Activated CD8-positive, alpha-beta T cell treated with anti-CD3 and anti-CD28 coated beads for 36 hours (primary cell): ENCODE measurements at regions of chr17 and their contacts with region 1.

Region 1: GRCh38 chr17:29617125-29617480 is 5.6 kb downstream of the CORO6 start:
- DNase-seq: peak; percentile 97
- ATAC-seq: peak; percentile 77
- H3K4me3 Mint-ChIP-seq: peak overlapping the region; percentile 84
- H3K27ac Mint-ChIP-seq: peak overlapping the region; percentile 88
- H3K4me1 Mint-ChIP-seq: peaks cover 40% of the 10 kb centered on the region
- H3K27me3 Mint-ChIP-seq: peaks cover 2% of the 10 kb centered on the region
- CTCF ChIP-seq: peak; percentile 66

Region 2: GRCh38 chr17:29568331-29569244 is 48.5 kb before region 1 on chr17 and contains the start of gene TP53I13:
- CTCF ChIA-PET with region 1: interaction called, 97 read pairs
- POLR2A ChIA-PET with region 1: interaction called, 19 read pairs
- intact Hi-C with region 1: no loop called
- DNase-seq: peak; percentile 92
- ATAC-seq: peak; percentile 62
- H3K4me3 Mint-ChIP-seq: peak within 1 kb of the TSS; percentile 86
- H3K27ac Mint-ChIP-seq: peak within 1 kb of the TSS; percentile 91
- H3K4me1 Mint-ChIP-seq: peaks cover 26% of the 10 kb centered on the region
- H3K27me3 Mint-ChIP-seq: no peaks in the 10 kb centered on the region
- CTCF ChIP-seq: no peak
- total RNA-seq, gene TP53I13: 46.7 to 50.2 TPM

Region 3: GRCh38 chr17:29589524-29590410 is 27.3 kb before region 1 on chr17 and contains the start of gene GIT1:
- CTCF ChIA-PET with region 1: interaction called, 172 read pairs
- POLR2A ChIA-PET with region 1: interaction called, 32 read pairs
- intact Hi-C with region 1: loop called (anchors 5 kb)
- DNase-seq: peak; percentile 86
- ATAC-seq: peak; percentile 77
- H3K4me3 Mint-ChIP-seq: peak within 1 kb of the TSS; percentile 87
- H3K27ac Mint-ChIP-seq: peak within 1 kb of the TSS; percentile 93
- H3K4me1 Mint-ChIP-seq: peaks cover 67% of the 10 kb centered on the region
- H3K27me3 Mint-ChIP-seq: no peaks in the 10 kb centered on the region
- CTCF ChIP-seq: no peak
- total RNA-seq, gene GIT1: 54.8 to 59.3 TPM

Region 4: GRCh38 chr17:29640413-29640812 is 23.3 kb after region 1 on chr17:
- CTCF ChIA-PET with region 1: interaction called, 41 read pairs
- POLR2A ChIA-PET with region 1: interaction called, 3 read pairs
- intact Hi-C with region 1: no loop called
- DNase-seq: no peak
- ATAC-seq: no peak
- H3K4me3 Mint-ChIP-seq: no peak overlapping the region
- H3K27ac Mint-ChIP-seq: peak overlapping the region; percentile 87
- H3K4me1 Mint-ChIP-seq: peaks cover 34% of the 10 kb centered on the region
- H3K27me3 Mint-ChIP-seq: no peaks in the 10 kb centered on the region
- CTCF ChIP-seq: no peak

Region 5: GRCh38 chr17:29705386-29705785 is 88.3 kb after region 1 on chr17:
- CTCF ChIA-PET with region 1: interaction called, 16 read pairs
- POLR2A ChIA-PET with region 1: interaction called, 21 read pairs
- intact Hi-C with region 1: no loop called
- DNase-seq: no peak
- ATAC-seq: no peak
- H3K4me3 Mint-ChIP-seq: peak overlapping the region; percentile 71
- H3K27ac Mint-ChIP-seq: peak overlapping the region; percentile 93
- H3K4me1 Mint-ChIP-seq: peaks cover 45% of the 10 kb centered on the region
- H3K27me3 Mint-ChIP-seq: no peaks in the 10 kb centered on the region
- CTCF ChIP-seq: no peak

Region 6: DNA sequence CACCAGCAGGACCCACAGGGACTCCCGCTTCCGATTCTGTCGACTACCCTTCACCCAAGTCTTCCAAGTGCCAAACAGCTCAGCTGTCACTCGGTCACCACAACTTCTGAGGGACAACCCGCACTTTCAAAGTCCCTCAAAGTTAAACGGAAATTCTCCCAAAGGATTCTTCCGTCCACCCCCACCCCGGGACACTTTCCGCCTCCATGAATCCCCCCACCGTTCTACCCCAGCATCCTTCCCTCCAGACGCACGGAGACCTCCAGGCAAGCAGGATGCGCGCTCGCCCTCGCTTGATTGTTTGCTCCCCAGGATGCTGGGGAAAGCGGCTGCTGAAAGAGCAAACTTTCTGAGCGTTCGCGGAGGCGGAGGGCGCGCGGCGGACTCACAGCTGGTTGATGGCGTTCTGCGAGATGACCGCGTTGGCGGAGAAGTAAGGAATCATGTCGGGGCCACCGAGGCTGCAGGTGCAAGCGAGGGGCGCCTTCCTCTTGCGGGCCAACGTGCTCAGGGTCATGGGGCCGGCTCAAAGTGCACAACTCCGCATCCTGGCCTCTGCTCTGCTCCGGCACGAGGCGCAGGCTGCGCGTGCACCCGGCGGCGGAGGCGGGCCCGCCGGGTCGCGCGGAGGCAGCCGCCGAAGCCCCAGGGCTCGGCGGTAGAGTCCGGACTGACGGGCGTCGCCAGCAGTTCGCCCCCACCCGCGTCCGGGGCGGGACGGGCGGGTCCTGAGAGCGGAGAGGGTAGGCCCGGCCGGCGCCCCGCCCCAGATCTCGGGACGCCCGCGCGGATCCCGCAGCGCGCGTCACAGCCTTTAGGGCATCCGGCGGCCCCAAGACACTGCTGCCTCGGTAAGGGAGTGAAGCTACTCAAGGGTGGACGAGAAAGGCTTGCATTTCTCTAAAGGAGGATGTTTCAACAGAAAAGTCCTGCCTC is 143.9 kb after region 1 on chr17:
- CTCF ChIA-PET with region 1: interaction called, 7 read pairs
- POLR2A ChIA-PET with region 1: interaction called, 16 read pairs
- intact Hi-C with region 1: no loop called
- DNase-seq: peak; percentile 96
- ATAC-seq: peak; percentile 94
- H3K4me3 Mint-ChIP-seq: peak overlapping the region; percentile 96
- H3K27ac Mint-ChIP-seq: peak overlapping the region; percentile 94
- H3K4me1 Mint-ChIP-seq: peaks cover 29% of the 10 kb centered on the region
- H3K27me3 Mint-ChIP-seq: no peaks in the 10 kb centered on the region
- CTCF ChIP-seq: no peak

Region 7: GRCh38 chr17:29789196-29790170 is 172.4 kb after region 1 on chr17:
- CTCF ChIA-PET with region 1: no interaction called
- POLR2A ChIA-PET with region 1: no interaction called
- intact Hi-C with region 1: no loop called
- DNase-seq: no peak
- ATAC-seq: no peak
- H3K4me3 Mint-ChIP-seq: no peak overlapping the region
- H3K27ac Mint-ChIP-seq: no peak overlapping the region
- H3K4me1 Mint-ChIP-seq: peaks cover 3% of the 10 kb centered on the region
- H3K27me3 Mint-ChIP-seq: no peaks in the 10 kb centered on the region
- CTCF ChIP-seq: no peak